ENCODE measurements at regions of chr4 and their contacts with region 1.

Region 1: GRCh38 chr4:138775890-138776289 is 239.7 kb upstream of the NOCT start:
- DNase-seq: peak in 20 of 42 donors; percentile 12 to 68 (median 34)

Region 2: DNA sequence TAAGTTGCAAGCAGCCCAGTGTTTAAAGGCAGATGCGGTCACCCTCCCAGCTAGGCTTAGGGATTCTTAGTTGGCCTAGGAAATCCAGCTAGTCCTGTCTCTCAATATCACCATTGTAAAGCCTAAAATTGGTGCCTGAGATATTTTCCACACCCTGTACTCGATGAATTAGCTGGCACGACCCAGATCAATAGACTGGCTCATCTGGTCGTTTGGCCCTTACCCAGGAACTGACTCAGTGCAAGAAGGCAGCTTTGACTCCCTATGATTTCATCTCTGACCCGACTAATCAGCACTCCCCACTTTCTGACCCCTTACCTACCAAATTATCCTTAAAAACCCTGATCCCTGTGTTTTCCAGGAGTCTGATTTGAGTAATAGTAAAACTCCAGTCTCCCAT is 148.8 kb before region 1 on chr4:
- intact Hi-C with region 1: no loop called
- DNase-seq: no peak

Region 3: DNA sequence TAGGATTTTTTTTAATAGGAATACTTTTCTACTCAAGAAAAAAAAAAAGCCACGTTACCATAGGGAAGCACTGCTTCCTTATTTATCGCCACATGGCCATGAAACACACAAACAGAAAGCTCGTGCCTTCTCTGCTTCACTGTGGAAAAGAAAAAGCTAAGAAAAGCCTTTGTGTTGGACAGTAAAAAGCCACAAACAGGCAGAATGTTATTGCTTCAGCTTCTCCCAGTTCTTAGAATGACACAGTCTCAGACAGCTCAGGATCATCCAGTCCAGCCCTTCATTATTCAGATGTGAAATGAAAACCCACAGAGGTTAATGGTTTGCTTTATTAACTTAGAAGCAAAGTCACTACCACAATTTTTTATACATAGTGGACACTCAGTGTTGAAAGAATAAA is 58.1 kb after region 1 on chr4:
- intact Hi-C with region 1: loop called (anchors 2 kb)
- DNase-seq: no peak

Region 4: GRCh38 chr4:139808808-139809756 is 1033.2 kb after region 1 on chr4:
- intact Hi-C with region 1: no loop called
- DNase-seq: no peak

Measured in head of caudate nucleus (tissue), 42 donors.